Heart left ventricle (tissue), 16 donors: ENCODE measurements at regions of chr12 and their contacts with region 1.

Region 1: GRCh38 chr12:85448548-85449139 is 168.6 kb downstream of the ALX1 start:
- DNase-seq: no peak
- ATAC-seq: no peak
- H3K4me3 ChIP-seq: no peak overlapping the region
- H3K27ac ChIP-seq: no peak overlapping the region
- H3K4me1 ChIP-seq: no peaks in the 10 kb centered on the region
- H3K27me3 ChIP-seq: peaks cover 0 to 17% (median 0%) of the 10 kb centered on the region in 9 donors
- CTCF ChIP-seq: peak in 8 of 12 donors; percentile 12 to 48 (median 23)
- POLR2A ChIP-seq: no peak

Region 2: GRCh38 chr12:85076688-85077430 is 371.8 kb before region 1 on chr12:
- intact Hi-C with region 1: loop called in 1 of 10 experiments (anchors 10 kb)
- DNase-seq: no peak
- ATAC-seq: peak in 2 of 4 donors; percentile 44 to 57
- H3K4me3 ChIP-seq: no peak overlapping the region
- H3K27ac ChIP-seq: no peak overlapping the region
- H3K4me1 ChIP-seq: no peaks in the 10 kb centered on the region
- H3K27me3 ChIP-seq: no peaks in the 10 kb centered on the region
- CTCF ChIP-seq: peak in 9 of 12 donors; percentile 21 to 53 (median 35)
- POLR2A ChIP-seq: no peak

Region 3: GRCh38 chr12:85179680-85180270 is 268.9 kb before region 1 on chr12:
- intact Hi-C with region 1: no loop called
- DNase-seq: no peak
- ATAC-seq: no peak
- H3K4me3 ChIP-seq: no peak overlapping the region
- H3K27ac ChIP-seq: no peak overlapping the region
- H3K4me1 ChIP-seq: no peaks in the 10 kb centered on the region
- H3K27me3 ChIP-seq: no peaks in the 10 kb centered on the region
- CTCF ChIP-seq: no peak
- POLR2A ChIP-seq: no peak

Region 4: DNA sequence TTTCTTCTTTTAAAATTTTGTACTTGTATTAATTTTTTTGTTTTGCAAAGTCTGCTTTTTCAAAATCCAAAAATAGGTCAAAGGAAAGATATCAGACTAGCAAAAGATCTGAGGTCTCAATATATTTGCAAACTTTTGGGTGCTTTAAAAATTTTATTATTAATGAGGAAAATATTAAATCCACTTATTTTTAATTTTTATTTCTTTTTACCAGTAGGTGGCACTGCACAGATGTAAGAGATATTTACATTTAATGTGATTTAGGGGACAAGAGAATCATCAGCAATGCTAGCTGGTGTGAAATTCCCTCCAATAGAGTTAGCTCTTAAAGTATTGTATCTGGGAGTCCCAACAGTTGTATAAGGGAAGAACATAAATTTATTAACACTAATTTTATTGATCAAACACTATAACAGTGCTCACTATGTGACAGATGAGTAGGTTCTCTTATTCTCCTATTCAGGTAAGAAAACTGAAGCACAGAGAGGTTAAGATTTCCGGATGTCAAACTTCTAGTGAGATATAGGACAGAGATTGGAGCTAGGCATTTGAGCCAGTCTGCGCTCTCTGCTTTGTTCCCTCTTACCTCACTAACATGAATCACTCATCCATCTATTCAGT is 138.1 kb before region 1 on chr12:
- intact Hi-C with region 1: loop called in 1 of 10 experiments (anchors 5 kb)
- DNase-seq: no peak
- ATAC-seq: no peak
- H3K4me3 ChIP-seq: no peak overlapping the region
- H3K27ac ChIP-seq: no peak overlapping the region
- H3K4me1 ChIP-seq: no peaks in the 10 kb centered on the region
- H3K27me3 ChIP-seq: peaks cover 0 to 14% (median 0%) of the 10 kb centered on the region in 9 donors
- CTCF ChIP-seq: peak in 9 of 12 donors; percentile 10 to 46 (median 28)
- POLR2A ChIP-seq: no peak

Region 5: DNA sequence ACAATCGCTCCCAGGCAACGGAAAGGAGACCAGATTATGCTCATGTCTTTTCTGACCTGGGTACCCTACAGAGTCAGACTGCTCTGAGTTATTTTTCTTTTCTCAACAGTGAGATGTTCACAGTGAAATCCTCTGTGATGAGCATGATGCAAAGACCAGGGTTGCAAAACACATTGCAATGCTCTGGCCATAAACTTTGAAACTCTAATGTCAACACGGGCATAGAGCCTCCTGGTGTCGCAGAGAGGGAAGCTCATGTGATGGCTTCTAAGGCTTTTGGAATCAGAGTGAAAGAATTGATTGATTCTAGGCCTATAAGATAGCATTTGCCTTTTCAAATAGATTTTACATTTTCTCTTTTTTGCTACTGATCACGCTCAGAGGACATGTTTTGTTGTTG is 194.2 kb after region 1 on chr12:
- intact Hi-C with region 1: no loop called
- DNase-seq: no peak
- ATAC-seq: no peak
- H3K4me3 ChIP-seq: no peak overlapping the region
- H3K27ac ChIP-seq: no peak overlapping the region
- H3K4me1 ChIP-seq: no peaks in the 10 kb centered on the region
- H3K27me3 ChIP-seq: no peaks in the 10 kb centered on the region
- CTCF ChIP-seq: no peak
- POLR2A ChIP-seq: no peak